Activated naive CD4-positive, alpha-beta T cell treated with anti-CD3 and anti-CD28 coated beads for 36 hours (primary cell): ENCODE measurements at regions of chr11 and their contacts with region 1.

Region 1: DNA sequence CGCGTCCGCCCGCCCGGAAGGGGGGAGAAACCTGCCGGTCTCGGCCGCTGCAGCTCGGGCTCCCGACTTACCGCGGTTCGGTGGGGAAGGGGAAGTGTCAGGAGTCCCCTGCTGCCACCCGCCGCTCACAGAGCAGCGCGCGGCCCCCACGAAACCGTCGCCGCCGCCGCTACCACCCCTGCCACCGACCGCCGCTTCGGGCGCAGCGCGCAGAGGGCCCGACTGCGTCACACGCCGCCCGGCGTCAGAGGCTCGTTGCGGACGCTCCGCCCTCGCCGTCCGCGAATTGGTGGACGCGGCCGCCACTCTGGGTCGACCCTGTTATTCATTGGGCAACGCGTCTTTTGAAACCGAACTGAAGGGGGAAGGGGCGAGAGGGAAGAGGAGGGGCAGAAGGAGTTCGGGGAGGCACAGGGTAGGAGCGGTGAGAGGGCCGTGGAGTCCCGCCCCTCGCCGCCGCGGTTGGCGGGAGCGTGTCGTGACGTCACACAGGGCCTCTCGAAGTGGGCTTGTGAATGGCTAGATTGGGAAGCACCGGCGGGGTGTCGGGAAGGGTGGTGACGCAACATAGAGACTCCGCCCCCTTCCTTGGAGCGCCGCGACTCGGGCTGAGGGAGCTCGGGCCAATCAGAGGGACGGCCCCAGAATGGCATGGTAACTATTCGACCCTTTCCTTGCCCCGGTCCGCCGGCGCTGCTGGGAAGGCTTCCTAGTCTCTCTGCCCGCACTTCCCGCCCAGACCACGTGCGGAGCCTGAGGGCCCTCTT is at the start of gene NUP98:
- DNase-seq: peak; percentile 100
- H3K4me3 Mint-ChIP-seq: peak within 1 kb of the TSS; percentile 98
- H3K27ac Mint-ChIP-seq: peak within 1 kb of the TSS; percentile 98
- H3K4me1 Mint-ChIP-seq: peaks cover 54% of the 10 kb centered on the region
- H3K27me3 Mint-ChIP-seq: no peaks in the 10 kb centered on the region
- total RNA-seq, gene NUP98: 90.8 to 97.6 TPM

Region 2: DNA sequence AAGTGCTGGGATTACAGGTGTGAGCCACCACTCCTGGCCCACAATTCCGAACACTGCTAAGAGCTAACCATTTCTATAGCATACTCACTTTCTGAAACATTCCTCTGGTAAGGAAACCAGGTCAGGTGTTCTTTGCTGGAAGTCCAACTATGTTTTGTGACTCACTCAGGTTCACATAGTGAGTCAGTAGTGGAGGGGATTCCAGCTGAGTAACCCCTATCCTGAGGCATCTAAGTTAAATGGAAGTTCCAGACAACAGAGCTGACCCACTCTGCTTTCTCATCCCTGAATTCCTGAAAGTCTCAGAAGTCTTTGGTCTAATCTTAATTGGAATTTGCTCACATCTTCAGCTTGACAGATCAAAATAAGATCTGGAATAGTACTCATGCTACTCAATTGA is 123.3 kb before region 1 on chr11:
- CTCF ChIA-PET with region 1: no interaction called
- intact Hi-C with region 1: no loop called
- DNase-seq: no peak
- H3K4me3 Mint-ChIP-seq: no peak overlapping the region
- H3K27ac Mint-ChIP-seq: no peak overlapping the region
- H3K4me1 Mint-ChIP-seq: peaks cover 3% of the 10 kb centered on the region
- H3K27me3 Mint-ChIP-seq: no peaks in the 10 kb centered on the region

Region 3: DNA sequence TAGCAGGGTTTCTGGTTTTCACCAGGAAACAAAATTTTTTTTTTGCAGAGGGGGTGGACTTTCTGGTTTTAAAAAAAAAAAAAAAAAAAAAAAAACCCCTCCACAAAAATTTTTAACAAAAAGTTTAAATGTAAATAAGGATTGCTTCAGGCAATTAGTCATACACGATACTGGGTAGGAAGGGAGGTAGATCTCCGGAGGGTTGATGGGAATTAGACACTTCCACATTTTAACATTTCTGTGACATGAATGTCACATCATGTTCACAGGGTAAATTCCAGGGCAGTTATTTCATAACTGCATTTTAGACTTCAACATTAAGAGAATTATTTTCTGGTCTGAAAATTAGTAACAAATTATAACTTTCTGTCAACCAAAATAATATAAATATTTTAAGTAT is 16.1 kb before region 1 on chr11:
- CTCF ChIA-PET with region 1: interaction called, 3 read pairs
- intact Hi-C with region 1: loop called (anchors 1 kb)
- DNase-seq: no peak
- H3K4me3 Mint-ChIP-seq: no peak overlapping the region
- H3K27ac Mint-ChIP-seq: peak overlapping the region; percentile 68
- H3K4me1 Mint-ChIP-seq: peaks cover 45% of the 10 kb centered on the region
- H3K27me3 Mint-ChIP-seq: no peaks in the 10 kb centered on the region

Region 4: GRCh38 chr11:3873712-3874349 is 76.3 kb after region 1 on chr11:
- CTCF ChIA-PET with region 1: no interaction called
- intact Hi-C with region 1: no loop called
- DNase-seq: no peak
- H3K4me3 Mint-ChIP-seq: no peak overlapping the region
- H3K27ac Mint-ChIP-seq: no peak overlapping the region
- H3K4me1 Mint-ChIP-seq: peaks cover 79% of the 10 kb centered on the region
- H3K27me3 Mint-ChIP-seq: no peaks in the 10 kb centered on the region

Region 5: GRCh38 chr11:4094348-4095291 is 297.1 kb after region 1 on chr11 and contains the start of gene RRM1:
- CTCF ChIA-PET with region 1: no interaction called
- intact Hi-C with region 1: loop called (anchors 1 kb)
- DNase-seq: peak; percentile 96
- H3K4me3 Mint-ChIP-seq: peak within 1 kb of the TSS; percentile 98
- H3K27ac Mint-ChIP-seq: peak within 1 kb of the TSS; percentile 97
- H3K4me1 Mint-ChIP-seq: peaks cover 73% of the 10 kb centered on the region
- H3K27me3 Mint-ChIP-seq: no peaks in the 10 kb centered on the region
- total RNA-seq, gene RRM1: 296 to 311 TPM